Mammary epithelial cell (primary cell): ENCODE measurements at regions of chrX and their contacts with region 1.

Region 1: GRCh38 chrX:46758906-46759644 is at the start of gene SLC9A7:
- DNase-seq: peak; percentile 72
- H3K4me3 ChIP-seq: peak within 1 kb of the TSS; percentile 56 to 79 (median 64)
- H3K27ac ChIP-seq: peak within 1 kb of the TSS; percentile 17
- H3K4me1 ChIP-seq: peaks cover 5% of the 10 kb centered on the region
- H3K27me3 ChIP-seq: no peaks in the 10 kb centered on the region
- CTCF ChIP-seq: peak; percentile 60 to 88
- total RNA-seq, gene SLC9A7: 32.4 to 72.7 TPM

Region 2: DNA sequence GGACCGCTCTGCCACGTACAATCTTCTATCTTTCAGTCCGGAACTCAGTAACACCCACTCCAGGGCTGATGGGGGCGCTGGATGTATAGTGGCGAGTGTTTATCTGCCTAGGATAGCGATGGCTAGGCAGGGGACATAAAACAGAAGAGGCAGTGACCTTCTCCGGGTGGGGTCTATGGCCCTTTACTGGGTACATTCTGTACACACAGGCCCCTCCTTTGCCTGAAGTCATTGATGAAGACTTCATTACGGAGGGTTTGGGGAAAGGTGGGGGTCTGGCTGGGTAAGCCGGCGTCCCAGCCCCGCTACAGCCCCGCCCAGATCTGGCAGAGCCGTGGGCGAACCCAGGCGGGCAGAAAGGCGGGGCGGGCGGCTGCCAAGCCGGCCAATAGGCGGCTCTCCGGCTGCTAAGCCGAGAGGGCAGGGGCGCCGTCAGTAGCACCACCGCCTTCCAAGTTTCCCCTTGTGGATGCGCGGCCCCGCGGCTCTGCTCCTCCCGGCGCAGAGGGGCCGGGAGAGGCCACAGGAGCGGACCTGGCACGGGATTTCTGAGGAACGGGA is 185.7 kb before region 1 on chrX and contains the start of gene CHST7:
- CTCF ChIA-PET with region 1: no interaction called
- dilution Hi-C with region 1: no loop called
- in situ Hi-C with region 1: no loop called
- intact Hi-C with region 1: loop called (anchors 5 kb)
- DNase-seq: peak; percentile 53
- H3K4me3 ChIP-seq: peak within 1 kb of the TSS; percentile 42 to 63 (median 56)
- H3K27ac ChIP-seq: no peak within 1 kb of the TSS
- H3K4me1 ChIP-seq: peaks cover 15% of the 10 kb centered on the region
- H3K27me3 ChIP-seq: no peaks in the 10 kb centered on the region
- CTCF ChIP-seq: peak; percentile 12 to 39
- total RNA-seq, gene CHST7: 3.0 to 8.8 TPM

Region 3: DNA sequence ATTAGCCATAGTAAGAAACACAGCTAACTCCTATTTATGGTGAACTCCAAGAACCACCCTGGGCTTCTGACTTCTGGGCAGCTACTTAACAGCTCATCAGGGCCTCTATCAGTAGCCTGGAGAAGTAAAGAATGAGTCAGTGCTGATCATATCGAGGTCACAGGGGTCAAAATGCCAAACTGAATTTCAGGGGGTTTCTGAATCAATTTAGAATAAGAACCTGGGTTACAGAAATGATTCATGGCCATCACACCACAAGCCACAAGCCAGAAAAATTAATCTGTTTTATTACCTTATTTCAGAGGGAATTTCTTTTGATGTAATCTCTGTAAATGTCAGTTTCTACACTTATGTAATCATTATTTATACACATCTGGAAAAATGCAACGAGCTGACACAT is 121.1 kb before region 1 on chrX:
- CTCF ChIA-PET with region 1: no interaction called
- dilution Hi-C with region 1: no loop called
- in situ Hi-C with region 1: no loop called
- intact Hi-C with region 1: no loop called
- DNase-seq: peak; percentile 62
- H3K4me3 ChIP-seq: no peak overlapping the region
- H3K27ac ChIP-seq: no peak overlapping the region
- H3K4me1 ChIP-seq: no peaks in the 10 kb centered on the region
- H3K27me3 ChIP-seq: no peaks in the 10 kb centered on the region
- CTCF ChIP-seq: no peak

Region 4: GRCh38 chrX:46686003-46686645 is 73.0 kb before region 1 on chrX:
- CTCF ChIA-PET with region 1: no interaction called
- dilution Hi-C with region 1: no loop called
- in situ Hi-C with region 1: no loop called
- intact Hi-C with region 1: loop called (anchors 2 kb)
- DNase-seq: peak; percentile 24
- H3K4me3 ChIP-seq: no peak overlapping the region
- H3K27ac ChIP-seq: no peak overlapping the region
- H3K4me1 ChIP-seq: peaks cover 10% of the 10 kb centered on the region
- H3K27me3 ChIP-seq: peaks cover 3% of the 10 kb centered on the region
- CTCF ChIP-seq: peak; percentile 73 to 74

Region 5: GRCh38 chrX:46796574-46797191 is 37.6 kb after region 1 on chrX:
- CTCF ChIA-PET with region 1: interaction called, 4 read pairs
- dilution Hi-C with region 1: no loop called
- in situ Hi-C with region 1: no loop called
- intact Hi-C with region 1: loop called (anchors 1 kb)
- DNase-seq: peak; percentile 57
- H3K4me3 ChIP-seq: no peak overlapping the region
- H3K27ac ChIP-seq: no peak overlapping the region
- H3K4me1 ChIP-seq: peaks cover 15% of the 10 kb centered on the region
- H3K27me3 ChIP-seq: no peaks in the 10 kb centered on the region
- CTCF ChIP-seq: peak; percentile 85 to 96

Region 6: DNA sequence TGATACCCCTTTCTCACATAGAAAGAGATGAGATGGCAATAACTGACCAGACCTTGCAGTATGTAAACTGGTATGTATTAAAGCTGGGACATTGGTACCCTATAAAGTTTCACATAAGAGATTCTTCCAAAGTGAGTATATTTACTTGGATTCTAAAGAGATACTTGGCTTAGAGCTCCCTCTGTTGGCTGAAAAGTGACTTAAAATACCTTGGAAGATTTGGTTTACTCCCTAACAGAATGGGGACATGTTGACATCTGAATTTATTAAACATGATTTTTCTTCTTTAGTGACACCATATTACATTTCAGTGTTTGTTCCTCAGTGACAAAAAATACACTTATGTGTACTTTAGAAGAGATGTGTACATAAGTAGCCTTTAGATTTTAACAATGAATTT is 271.3 kb after region 1 on chrX:
- CTCF ChIA-PET with region 1: no interaction called
- dilution Hi-C with region 1: no loop called
- in situ Hi-C with region 1: no loop called
- intact Hi-C with region 1: loop called (anchors 5 kb)
- DNase-seq: peak; percentile 40
- H3K4me3 ChIP-seq: no peak overlapping the region
- H3K27ac ChIP-seq: no peak overlapping the region
- H3K4me1 ChIP-seq: no peaks in the 10 kb centered on the region
- H3K27me3 ChIP-seq: peaks cover 2% of the 10 kb centered on the region
- CTCF ChIP-seq: peak; percentile 63 to 68